ENCODE measurements at regions of chrX and their contacts with region 1.

Region 1: DNA sequence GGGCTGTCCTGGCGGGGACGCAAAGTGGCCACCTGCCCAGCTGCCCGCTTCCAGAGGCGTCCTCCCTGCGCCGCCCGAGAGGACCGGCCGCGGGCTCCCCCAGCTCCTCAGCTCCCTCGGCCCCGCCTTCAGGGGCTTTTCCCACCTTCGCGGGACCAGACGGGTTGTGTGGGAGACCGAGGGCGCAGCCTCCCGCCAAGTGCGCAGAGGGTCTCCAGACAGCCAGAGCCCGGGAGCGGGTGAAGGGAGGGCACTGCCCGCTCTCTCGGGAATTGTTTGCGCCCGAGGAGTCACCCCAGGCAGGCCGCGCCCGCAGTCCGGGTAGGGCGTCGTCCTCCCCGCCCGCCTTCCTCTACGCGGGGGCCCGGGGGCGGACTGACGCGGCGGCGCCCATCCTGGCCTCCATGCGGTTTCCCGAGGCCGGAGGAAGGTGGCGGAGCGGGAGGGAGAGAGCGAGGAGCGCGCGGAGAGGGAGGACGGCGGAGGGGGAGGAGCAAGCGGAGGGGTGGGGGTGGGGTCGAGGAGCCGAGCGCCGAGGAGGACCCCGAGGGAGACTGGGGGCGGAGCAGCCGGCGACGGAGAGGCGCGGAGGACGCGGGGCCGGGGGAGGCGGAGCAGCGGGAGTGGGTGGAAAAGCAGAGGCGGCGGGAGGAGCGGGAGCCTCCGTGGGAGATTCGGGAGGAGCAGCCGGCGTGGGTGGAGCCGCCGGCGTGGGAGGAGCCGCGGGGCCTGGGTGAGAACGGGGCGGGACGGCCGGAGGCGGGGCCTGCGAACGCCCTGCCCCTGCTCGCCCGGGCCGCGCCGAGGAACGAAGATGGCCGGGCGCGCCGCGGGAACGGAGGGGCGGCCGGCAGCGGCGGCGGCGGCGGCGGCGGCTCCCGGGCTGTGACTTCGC is 47.6 kb downstream of the CLDN34 start:
- DNase-seq: no peak
- H3K4me3 ChIP-seq: peak overlapping the region; percentile 58
- CTCF ChIP-seq: no peak

Region 2: DNA sequence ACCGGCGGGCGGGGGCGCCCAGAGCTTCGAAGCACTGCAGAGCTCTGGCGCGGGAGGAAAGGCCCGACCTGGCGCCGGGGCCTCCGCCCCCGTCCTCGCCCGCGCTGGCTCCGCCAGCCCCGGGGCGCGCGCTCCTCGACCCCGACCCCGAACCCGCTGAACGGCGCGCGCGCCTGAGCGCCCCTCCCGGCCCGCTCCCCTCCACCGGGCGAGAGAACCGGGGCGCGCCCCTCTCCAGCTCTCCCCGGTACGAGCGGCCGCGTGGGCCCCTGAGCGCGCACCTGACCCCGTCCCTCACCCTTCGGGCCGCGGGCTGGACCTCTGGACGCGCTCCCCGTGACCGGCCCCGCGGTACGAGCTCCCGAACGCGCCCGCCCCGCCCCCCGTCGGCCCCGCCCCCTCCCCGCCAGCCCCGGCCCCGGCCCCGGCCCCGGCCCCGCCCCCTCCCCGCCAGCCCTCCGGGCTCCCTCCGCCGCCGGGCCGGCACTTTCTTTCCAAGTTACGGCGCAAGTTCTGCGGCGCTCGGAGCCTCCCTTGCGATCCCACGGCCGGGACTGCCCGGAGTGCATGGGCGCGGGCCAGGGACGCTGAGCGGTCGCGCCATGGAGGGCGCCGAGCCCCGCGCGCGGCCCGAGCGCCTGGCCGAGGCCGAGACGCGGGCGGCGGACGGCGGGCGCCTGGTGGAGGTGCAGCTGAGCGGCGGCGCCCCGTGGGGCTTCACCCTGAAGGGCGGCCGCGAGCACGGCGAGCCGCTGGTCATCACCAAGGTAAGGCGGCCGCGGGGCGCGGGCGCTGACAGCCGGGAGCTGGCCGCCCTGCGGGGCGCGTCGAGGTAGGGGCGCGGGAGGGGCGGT is 228.5 kb before region 1 on chrX and contains the start of gene SHROOM2:
- CTCF ChIA-PET with region 1: no interaction called
- POLR2A ChIA-PET with region 1: no interaction called
- DNase-seq: no peak
- H3K4me3 ChIP-seq: peak within 1 kb of the TSS; percentile 34
- CTCF ChIP-seq: no peak

Region 3: GRCh38 chrX:9832464-9833210 is 182.1 kb before region 1 on chrX:
- CTCF ChIA-PET with region 1: no interaction called
- POLR2A ChIA-PET with region 1: no interaction called
- DNase-seq: no peak
- H3K4me3 ChIP-seq: no peak overlapping the region
- CTCF ChIP-seq: no peak

Region 4: GRCh38 chrX:9995855-9996339 is 18.8 kb before region 1 on chrX:
- CTCF ChIA-PET with region 1: interaction called, 12 read pairs
- POLR2A ChIA-PET with region 1: no interaction called
- DNase-seq: no peak
- H3K4me3 ChIP-seq: no peak overlapping the region
- CTCF ChIP-seq: peak; percentile 85

Region 5: DNA sequence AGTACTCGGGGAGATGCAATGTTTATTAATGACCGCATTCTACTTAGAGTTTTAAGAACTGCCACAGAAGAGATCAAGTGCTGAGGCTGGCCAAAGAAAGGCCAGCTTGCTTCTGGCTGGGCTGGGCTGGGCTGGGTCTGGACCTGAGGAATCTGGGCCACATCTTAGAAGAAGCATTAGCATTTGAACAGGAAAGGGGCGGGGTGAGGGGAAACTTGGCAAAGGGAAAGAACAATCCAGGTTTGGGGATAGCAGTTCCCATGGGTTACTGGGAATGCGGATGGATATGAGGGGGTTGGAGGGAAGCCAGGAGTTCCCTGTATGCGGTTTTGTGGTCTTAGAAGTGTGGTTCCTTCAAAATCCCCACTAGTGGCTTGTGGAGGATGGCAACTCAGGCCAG is 35.8 kb after region 1 on chrX:
- CTCF ChIA-PET with region 1: no interaction called
- POLR2A ChIA-PET with region 1: no interaction called
- DNase-seq: no peak
- H3K4me3 ChIP-seq: no peak overlapping the region
- CTCF ChIP-seq: no peak

Region 6: GRCh38 chrX:10310511-10310910 is 295.8 kb after region 1 on chrX:
- CTCF ChIA-PET with region 1: no interaction called
- POLR2A ChIA-PET with region 1: no interaction called
- DNase-seq: no peak
- H3K4me3 ChIP-seq: no peak overlapping the region
- CTCF ChIP-seq: no peak

Measured in AG04449 (cell line).